ENCODE measurements at regions of chr6 and their contacts with region 1.

Region 1: DNA sequence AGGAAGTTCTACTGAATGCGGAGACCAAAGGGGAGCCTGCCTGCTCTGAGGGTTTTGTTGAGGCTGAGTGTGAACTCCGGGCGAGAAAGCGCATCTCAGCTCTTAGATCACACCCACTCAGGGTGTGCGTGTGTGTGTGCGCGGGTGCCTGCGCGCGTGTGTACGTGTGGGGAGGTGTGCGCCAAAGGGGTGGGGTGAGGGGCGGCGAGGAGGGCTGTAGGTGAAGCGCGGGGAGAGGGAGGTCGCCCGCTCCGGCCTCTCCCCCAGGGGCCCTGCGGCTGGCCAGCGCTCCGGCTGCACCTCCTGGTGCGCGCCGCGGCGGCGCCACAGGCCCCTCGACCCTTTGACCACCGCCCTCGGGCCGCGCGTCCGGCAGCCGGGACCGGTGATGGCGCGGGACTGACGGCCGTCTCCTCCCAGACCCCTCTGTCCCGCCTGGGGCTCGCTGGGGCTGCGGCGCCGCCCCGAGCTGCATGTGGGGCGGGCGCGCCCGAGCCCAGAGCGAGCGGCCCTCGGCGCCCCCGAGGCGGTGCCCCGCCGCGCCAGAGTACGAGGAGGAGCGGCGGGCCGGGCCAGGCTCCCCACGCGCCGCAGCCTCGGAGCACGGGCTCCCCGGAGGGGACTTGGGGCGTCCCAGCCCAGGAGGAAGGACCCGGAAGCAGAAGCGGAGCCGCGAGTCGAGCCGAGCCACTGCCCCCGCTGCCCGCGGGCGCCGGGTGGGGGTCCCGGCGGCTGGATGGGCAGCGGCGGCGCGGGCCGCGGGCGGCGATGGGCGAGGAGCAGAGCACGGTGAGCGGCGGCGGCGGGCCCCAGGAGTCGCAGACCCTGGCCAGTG is at the start of gene RNF217:
- DNase-seq: peak; percentile 51 to 63
- H3K4me3 ChIP-seq: peak within 1 kb of the TSS; percentile 79
- H3K27ac ChIP-seq: peak within 1 kb of the TSS; percentile 67
- H3K4me1 ChIP-seq: peaks cover 44% of the 10 kb centered on the region
- H3K27me3 ChIP-seq: no peaks in the 10 kb centered on the region
- CTCF ChIP-seq: no peak
- total RNA-seq, gene RNF217: 38.3 and 42.3 TPM in 2 replicates

Region 2: DNA sequence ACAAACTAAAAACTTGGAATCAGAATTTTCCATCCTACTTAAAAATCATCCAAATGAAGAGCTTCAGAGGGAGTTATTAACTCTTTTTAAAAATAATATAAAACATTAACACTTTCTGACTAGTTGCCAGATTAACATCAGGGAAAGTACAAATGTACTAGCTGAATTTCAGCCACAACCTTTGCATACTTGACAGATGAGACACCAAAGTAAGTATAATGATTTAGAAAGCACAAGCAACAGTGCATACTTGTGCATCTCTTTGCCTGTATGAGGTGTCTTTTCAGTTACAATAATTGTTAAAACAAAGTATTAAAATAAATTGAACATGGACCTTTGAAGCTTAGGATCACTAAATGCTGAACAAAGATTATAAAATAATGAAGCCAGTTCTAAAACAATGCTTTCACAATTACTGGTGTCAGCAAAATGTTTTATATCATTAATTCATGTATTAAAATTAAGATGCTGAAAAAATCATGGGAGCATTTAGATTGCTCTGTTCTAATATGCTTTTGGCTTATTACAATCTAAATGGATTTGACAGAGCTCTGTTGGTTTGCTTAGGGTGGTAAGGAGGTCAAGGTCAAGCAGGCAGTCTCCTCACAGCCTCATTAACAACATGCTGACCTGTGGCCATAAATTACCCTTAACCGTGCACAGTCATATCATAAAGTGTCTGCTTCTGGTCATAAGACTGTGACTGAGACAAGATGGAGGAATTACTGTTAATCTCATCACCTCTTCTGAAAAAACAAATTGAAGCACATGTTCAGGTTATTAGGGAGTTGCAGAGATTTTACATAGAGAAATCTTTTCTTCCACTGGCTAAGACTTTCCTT is 15.3 kb after region 1 on chr6:
- CTCF ChIA-PET with region 1: interaction called, 3 read pairs
- POLR2A ChIA-PET with region 1: interaction called, 10 read pairs
- intact Hi-C with region 1: loop called (anchors 2 kb)
- DNase-seq: no peak
- H3K4me3 ChIP-seq: no peak overlapping the region
- H3K27ac ChIP-seq: peak overlapping the region; percentile 37
- H3K4me1 ChIP-seq: peaks cover 18% of the 10 kb centered on the region
- H3K27me3 ChIP-seq: no peaks in the 10 kb centered on the region
- CTCF ChIP-seq: no peak

Region 3: DNA sequence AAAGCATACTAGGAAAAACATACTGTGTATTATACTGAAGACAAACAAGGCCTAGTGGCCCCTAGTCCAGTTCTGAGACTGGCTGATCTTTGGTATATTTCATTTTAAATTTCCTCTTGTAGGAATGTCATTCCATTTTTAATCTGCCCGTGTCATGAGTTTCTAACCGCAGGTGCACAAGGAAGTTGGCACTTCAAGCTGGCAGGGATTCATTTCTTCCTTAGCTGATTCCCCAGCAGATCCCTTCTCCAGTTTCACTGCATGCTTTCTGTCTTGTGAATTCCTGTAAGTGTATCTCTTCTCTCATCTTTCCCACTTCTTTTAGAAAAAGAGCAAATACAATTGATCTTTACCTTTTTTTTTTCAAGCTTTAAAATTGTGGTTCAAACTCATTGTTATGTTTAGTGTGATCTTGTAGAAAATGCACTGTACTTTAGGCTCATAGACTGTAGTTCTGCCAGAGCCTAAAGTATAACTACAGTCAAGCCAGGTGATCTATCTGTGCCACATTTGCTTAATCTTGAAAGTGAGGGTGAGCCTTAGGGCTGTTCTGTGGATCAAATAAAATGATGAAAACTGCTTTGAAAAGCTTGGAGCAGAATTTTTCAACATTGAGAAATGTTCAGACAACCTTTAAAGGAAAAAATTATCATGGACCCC is 37.2 kb after region 1 on chr6:
- CTCF ChIA-PET with region 1: interaction called, 3 read pairs
- POLR2A ChIA-PET with region 1: interaction called, 3 read pairs
- intact Hi-C with region 1: loop called (anchors 5 kb)
- DNase-seq: peak; percentile 44 to 75
- H3K4me3 ChIP-seq: no peak overlapping the region
- H3K27ac ChIP-seq: peak overlapping the region; percentile 60
- H3K4me1 ChIP-seq: peaks cover 39% of the 10 kb centered on the region
- H3K27me3 ChIP-seq: no peaks in the 10 kb centered on the region
- CTCF ChIP-seq: no peak

Region 4: DNA sequence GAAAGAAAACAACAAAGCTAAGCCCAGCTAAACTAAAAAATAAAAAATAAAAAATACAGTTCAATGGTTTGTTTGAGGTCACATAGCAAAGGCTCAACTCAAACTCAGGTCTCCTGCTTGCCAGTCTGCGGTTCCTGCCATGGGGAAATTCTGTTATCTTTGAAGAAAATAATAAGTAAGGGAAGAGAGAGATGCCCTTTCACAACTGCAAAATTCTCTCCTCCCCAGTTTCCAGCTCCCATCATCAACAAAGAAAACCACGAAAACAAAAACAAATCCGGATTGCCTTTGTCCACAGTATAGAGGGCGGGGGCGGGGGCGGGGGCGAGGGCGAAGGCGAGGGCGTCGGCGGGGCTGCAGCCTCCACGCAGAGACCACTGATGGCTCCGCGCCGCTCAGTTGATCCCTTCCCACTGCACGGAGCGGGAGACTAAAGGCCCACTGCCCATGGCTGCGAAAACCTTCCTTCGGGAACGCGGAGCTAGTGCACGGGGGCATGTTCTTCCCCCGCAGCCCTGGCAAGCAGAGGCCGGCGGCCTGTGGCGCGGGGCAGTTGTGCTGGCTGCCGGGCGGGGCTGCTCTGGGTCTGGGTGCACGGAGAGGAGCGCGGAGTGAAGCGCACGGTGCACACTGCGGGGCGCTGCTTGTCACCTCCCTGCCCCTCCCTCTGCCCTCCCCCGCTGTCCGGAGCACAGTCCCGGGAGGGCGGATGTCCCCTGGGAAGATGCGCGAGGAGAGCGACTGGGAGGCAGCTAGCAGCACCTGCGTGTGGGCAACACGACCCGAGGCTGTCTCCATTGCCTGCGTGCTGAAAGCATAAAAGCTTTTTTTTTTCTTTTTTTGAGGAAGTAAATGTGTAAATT is 137.4 kb after region 1 on chr6:
- CTCF ChIA-PET with region 1: no interaction called
- POLR2A ChIA-PET with region 1: interaction called, 3 read pairs
- intact Hi-C with region 1: loop called (anchors 2 kb)
- DNase-seq: peak; percentile 57 to 74
- H3K4me3 ChIP-seq: peak overlapping the region; percentile 68
- H3K27ac ChIP-seq: no peak overlapping the region
- H3K4me1 ChIP-seq: peaks cover 24% of the 10 kb centered on the region
- H3K27me3 ChIP-seq: no peaks in the 10 kb centered on the region
- CTCF ChIP-seq: no peak

Region 5: GRCh38 chr6:125301435-125302391 is 339.7 kb after region 1 on chr6 and contains the start of gene HDDC2:
- CTCF ChIA-PET with region 1: no interaction called
- POLR2A ChIA-PET with region 1: no interaction called
- intact Hi-C with region 1: loop called (anchors 10 kb)
- DNase-seq: peak; percentile 67 to 68
- H3K4me3 ChIP-seq: peak within 1 kb of the TSS; percentile 89
- H3K27ac ChIP-seq: peak within 1 kb of the TSS; percentile 60
- H3K4me1 ChIP-seq: peaks cover 12% of the 10 kb centered on the region
- H3K27me3 ChIP-seq: no peaks in the 10 kb centered on the region
- CTCF ChIP-seq: no peak
- total RNA-seq, gene HDDC2: 50.1 and 55.2 TPM in 2 replicates

Measured in PC-9 (cell line).